ENCODE measurements at regions of chrX and their contacts with region 1.

Region 1: DNA sequence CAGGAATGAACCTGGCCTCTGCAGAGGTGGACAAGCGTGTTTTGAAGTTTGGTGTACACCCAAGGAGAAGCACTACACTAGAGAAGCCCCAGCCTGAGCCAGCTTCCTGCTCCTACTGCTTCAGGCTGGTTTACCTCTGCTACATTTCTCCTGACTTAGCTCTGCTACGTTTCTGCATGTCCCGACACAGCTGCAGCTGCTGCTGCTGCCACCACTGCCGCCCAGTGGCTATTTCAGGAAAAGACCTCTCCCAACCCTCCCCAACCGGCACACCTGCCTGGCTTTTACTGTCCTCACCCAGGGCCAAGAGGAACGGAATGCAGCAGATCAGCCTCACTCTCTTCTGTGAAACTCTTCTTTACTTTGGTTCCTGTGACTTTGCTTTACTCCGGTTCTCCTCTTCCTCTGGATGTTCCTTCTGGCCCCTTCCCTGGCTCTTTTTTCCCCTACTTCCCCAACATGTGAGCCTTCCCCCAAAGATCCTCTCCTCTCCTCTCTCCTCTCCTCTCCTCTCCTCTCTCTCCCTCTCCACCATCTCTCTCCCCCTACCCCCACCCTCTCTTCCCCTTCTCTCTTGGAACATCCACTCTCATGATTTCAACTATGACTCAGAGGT is 3.1 kb upstream of the P2RY4 start:
- DNase-seq: peak; percentile 51 to 64
- H3K4me3 ChIP-seq: no peak overlapping the region
- H3K27ac ChIP-seq: no peak overlapping the region
- H3K4me1 ChIP-seq: no peaks in the 10 kb centered on the region
- H3K27me3 ChIP-seq: no peaks in the 10 kb centered on the region
- CTCF ChIP-seq: peak; percentile 72

Region 2: DNA sequence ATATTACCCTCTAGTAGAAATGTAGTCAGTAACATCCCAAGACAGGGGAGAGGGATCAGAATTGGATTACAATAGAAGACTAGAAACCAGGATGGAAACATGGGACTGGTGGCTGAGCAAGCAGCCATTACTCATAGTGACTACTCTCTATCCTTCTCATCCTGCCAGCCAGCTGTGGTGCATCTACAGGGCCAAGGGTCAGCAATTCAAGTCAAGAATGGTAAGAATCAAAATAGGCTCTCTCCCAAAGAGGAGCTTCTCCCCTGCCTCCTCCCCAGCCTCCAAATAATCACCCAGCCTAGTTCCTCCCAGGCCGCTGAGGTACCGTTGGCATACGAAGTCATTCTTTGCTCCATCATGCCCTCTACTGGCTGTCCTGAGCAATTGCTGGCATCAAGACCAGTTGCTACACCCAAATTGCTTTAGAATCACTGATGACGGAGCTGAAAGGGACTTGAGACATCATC is 232.7 kb before region 1 on chrX:
- CTCF ChIA-PET with region 1: no interaction called
- POLR2A ChIA-PET with region 1: no interaction called
- intact Hi-C with region 1: loop called (anchors 5 kb)
- DNase-seq: peak in 1 of 2 experiments; percentile 7
- H3K4me3 ChIP-seq: no peak overlapping the region
- H3K27ac ChIP-seq: no peak overlapping the region
- H3K4me1 ChIP-seq: no peaks in the 10 kb centered on the region
- H3K27me3 ChIP-seq: no peaks in the 10 kb centered on the region; the same call in 1 of the 2 replicates
- CTCF ChIP-seq: peak; percentile 71

Region 3: DNA sequence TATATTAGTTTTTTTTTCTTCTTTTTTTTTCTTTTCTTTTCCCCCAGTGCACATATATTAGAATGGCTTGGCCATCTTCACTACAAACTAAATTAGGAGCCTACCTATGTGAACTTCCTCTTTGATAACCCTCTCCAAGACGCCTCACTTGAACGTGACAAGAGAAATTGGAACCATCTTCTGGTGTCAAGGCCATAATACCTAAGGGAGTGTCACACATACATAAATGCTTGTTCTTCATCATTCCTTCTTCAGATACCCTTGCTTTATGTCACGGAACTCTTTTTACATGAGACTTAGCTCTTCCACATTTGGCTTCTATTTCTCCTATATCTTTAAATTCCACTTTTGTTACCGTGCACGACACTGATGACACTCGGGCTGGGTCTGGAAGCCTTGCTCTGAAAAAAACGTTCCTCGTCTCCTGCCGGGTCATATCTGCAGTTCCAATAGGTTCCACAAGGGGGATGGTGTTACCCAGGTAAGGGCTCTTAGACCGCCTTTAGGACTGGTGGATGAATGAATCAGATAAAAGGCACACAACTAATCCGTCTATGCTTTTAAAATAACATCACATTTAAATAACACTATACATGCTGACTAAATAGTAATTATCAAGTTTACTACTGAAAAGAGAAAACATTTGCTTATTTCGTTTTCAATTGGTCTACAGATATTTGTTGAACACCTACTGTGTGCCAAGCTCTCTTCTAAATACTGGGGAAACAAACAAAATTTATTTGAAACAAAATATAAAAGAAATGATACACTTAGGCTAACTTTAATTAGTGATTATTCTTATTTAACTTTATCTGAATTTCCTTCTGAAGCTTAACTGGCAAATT is 65.9 kb before region 1 on chrX:
- CTCF ChIA-PET with region 1: interaction called, 3 read pairs
- POLR2A ChIA-PET with region 1: no interaction called
- intact Hi-C with region 1: loop called (anchors 1 kb)
- DNase-seq: peak; percentile 50 to 54
- H3K4me3 ChIP-seq: no peak overlapping the region
- H3K27ac ChIP-seq: no peak overlapping the region
- H3K4me1 ChIP-seq: no peaks in the 10 kb centered on the region
- H3K27me3 ChIP-seq: no peaks in the 10 kb centered on the region
- CTCF ChIP-seq: peak; percentile 78